ENCODE measurements at regions of chr12 and their contacts with region 1.

Region 1: DNA sequence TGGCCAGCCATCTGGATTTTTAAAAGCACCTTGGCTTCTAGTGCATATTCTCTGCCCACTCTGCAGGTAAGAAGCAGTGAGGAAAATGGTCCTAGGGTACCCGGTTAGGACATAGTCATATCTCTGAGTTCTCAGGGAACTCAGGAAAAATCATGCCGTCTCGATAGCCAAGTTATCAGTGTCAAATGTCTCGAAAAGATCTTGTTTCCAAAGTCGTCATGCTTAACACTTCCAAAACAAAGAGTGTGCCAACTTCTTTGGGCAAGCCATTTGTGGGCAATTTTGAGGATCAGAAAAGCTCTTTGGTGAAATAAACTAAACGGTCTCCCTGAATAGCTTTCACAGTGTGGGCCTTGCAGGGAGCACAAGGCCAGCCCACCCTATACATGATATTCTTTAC is 39.2 kb downstream of the RASSF3 start:
- DNase-seq: no peak
- H3K4me3 ChIP-seq: no peak overlapping the region
- H3K27ac ChIP-seq: no peak overlapping the region
- H3K4me1 ChIP-seq: peaks cover 19% of the 10 kb centered on the region
- H3K27me3 ChIP-seq: no peaks in the 10 kb centered on the region
- CTCF ChIP-seq: no peak

Region 2: GRCh38 chr12:64670019-64670418 is 20.5 kb after region 1 on chr12:
- CTCF ChIA-PET with region 1: interaction called, 18 read pairs
- POLR2A ChIA-PET with region 1: interaction called, 4 read pairs
- intact Hi-C with region 1: no loop called
- DNase-seq: no peak
- H3K4me3 ChIP-seq: no peak overlapping the region
- H3K27ac ChIP-seq: peak overlapping the region; percentile 87
- H3K4me1 ChIP-seq: peaks cover 89% of the 10 kb centered on the region
- H3K27me3 ChIP-seq: no peaks in the 10 kb centered on the region
- CTCF ChIP-seq: no peak

Measured in PC-9 (cell line).